Esophagus muscularis mucosa (tissue), 4 donors: ENCODE measurements at regions of chr16 and their contacts with region 1.

Region 1: GRCh38 chr16:49491771-49492761 is 118.5 kb downstream of the C16orf78 start:
- DNase-seq: no peak
- H3K4me3 ChIP-seq: peak overlapping the region; percentile 45 to 59 (median 46)
- H3K27ac ChIP-seq: peak overlapping the region in 1 of 4 donors; percentile 36
- H3K4me1 ChIP-seq: peaks cover 10 to 30% (median 17%) of the 10 kb centered on the region in 4 donors
- H3K27me3 ChIP-seq: no peaks in the 10 kb centered on the region
- CTCF ChIP-seq: peak; percentile 84 to 99 (median 95)
- EP300 ChIP-seq: no peak
- POLR2A ChIP-seq: no peak

Region 2: DNA sequence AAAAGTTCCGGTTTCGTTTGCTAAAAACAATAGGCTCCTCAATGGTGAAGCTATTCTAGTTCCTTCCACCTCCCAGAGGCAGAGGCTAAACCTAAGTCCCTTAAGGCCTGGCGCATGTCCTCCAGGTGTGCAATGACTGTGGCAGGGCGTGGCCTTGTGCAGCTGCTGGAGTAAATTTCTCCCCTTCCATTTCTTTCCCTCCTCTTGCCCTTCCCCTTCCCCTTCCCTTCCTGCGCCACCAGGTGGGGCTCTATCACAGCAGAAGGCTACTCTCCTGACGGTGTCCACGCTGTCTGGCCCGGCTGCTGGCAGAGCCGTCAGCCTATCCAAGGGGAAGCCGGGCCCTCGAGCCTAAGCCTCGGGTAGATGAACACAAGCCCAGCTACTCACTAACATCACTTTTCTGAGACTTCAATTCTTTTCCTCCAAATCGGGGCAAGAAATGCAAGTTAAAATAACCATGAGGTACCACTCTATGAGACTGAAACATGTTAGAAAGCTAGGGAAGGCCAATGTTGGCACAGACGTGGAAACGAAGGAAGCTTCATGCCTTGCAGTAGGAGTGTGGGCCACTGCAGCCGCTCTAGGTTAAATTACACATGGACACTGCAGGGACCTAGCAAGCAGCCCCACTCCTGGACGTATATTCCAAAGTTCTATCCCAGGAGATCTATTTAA is 84.1 kb before region 1 on chr16:
- intact Hi-C with region 1: loop called (anchors 5 kb)
- DNase-seq: no peak
- H3K4me3 ChIP-seq: no peak overlapping the region
- H3K27ac ChIP-seq: no peak overlapping the region
- H3K4me1 ChIP-seq: peaks cover 0 to 10% (median 7%) of the 10 kb centered on the region in 4 donors
- H3K27me3 ChIP-seq: no peaks in the 10 kb centered on the region
- CTCF ChIP-seq: peak; percentile 91 to 96 (median 92)
- EP300 ChIP-seq: no peak
- POLR2A ChIP-seq: no peak

Region 3: DNA sequence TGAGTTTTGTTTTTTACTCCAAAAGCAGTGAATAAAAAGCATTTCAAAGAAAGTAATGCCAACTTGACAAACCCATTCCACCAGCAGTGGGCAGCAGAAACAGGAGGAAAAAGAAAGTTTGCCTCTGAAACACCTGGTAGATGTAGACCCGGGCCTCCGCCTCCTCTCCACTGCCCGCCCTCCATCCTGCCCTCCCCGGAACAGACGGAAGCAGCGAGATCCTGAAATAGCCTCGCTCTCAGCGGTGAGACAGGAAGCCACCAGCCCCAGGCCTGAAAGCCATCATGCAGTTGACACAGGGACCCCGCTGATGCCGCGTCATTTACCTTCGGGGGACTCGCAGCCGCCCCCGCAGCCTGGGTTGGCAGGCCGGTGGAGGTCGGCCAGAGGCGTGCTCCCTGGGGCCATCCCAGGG is 50.7 kb before region 1 on chr16:
- intact Hi-C with region 1: no loop called
- DNase-seq: no peak
- H3K4me3 ChIP-seq: peak overlapping the region in 1 of 4 donors; percentile 13
- H3K27ac ChIP-seq: no peak overlapping the region
- H3K4me1 ChIP-seq: peaks cover 8 to 14% (median 9%) of the 10 kb centered on the region in 4 donors
- H3K27me3 ChIP-seq: peaks cover 0 to 20% (median 0%) of the 10 kb centered on the region in 4 donors
- CTCF ChIP-seq: peak in 1 of 3 experiments; percentile 11
- EP300 ChIP-seq: no peak
- POLR2A ChIP-seq: no peak

Region 4: DNA sequence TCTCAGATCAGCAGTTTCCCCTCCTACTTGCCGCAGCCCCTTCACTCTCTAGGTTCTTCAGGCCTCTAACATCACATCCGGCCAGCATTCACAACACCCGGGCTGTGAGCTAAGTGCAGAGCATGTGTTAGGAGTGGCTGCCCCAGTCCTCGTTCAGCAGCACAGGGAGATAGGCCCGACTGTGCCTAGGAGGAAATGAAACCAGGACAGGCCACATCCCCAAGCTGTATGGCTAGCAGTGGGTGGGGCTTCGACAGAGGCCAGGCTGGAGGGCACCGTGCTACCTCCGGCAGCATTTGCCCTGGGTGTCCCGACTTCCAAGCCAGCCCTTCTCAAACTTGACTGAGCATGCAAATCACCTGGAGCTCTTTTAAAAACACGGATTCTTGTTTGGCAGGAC is 83.3 kb after region 1 on chr16:
- intact Hi-C with region 1: no loop called
- DNase-seq: no peak
- H3K4me3 ChIP-seq: no peak overlapping the region
- H3K27ac ChIP-seq: no peak overlapping the region
- H3K4me1 ChIP-seq: peaks cover 0 to 3% (median 0%) of the 10 kb centered on the region in 4 donors
- H3K27me3 ChIP-seq: no peaks in the 10 kb centered on the region
- CTCF ChIP-seq: no peak
- EP300 ChIP-seq: no peak
- POLR2A ChIP-seq: no peak

Region 5: GRCh38 chr16:49592546-49593423 is 100.7 kb after region 1 on chr16:
- intact Hi-C with region 1: loop called (anchors 5 kb)
- DNase-seq: no peak
- H3K4me3 ChIP-seq: no peak overlapping the region
- H3K27ac ChIP-seq: no peak overlapping the region
- H3K4me1 ChIP-seq: peaks cover 3 to 31% (median 28%) of the 10 kb centered on the region in 4 donors
- H3K27me3 ChIP-seq: no peaks in the 10 kb centered on the region
- CTCF ChIP-seq: peak; percentile 57 to 84 (median 58)
- EP300 ChIP-seq: no peak
- POLR2A ChIP-seq: no peak

Region 6: GRCh38 chr16:49755313-49755620 is 263.2 kb after region 1 on chr16:
- intact Hi-C with region 1: loop called (anchors 5 kb)
- DNase-seq: no peak
- H3K4me3 ChIP-seq: peak overlapping the region; percentile 51 to 60 (median 56)
- H3K27ac ChIP-seq: peak overlapping the region; percentile 64 to 74 (median 70)
- H3K4me1 ChIP-seq: peaks cover 30 to 42% (median 31%) of the 10 kb centered on the region in 4 donors
- H3K27me3 ChIP-seq: no peaks in the 10 kb centered on the region
- CTCF ChIP-seq: peak; percentile 44 to 59 (median 51)
- EP300 ChIP-seq: no peak
- POLR2A ChIP-seq: no peak

Region 7: DNA sequence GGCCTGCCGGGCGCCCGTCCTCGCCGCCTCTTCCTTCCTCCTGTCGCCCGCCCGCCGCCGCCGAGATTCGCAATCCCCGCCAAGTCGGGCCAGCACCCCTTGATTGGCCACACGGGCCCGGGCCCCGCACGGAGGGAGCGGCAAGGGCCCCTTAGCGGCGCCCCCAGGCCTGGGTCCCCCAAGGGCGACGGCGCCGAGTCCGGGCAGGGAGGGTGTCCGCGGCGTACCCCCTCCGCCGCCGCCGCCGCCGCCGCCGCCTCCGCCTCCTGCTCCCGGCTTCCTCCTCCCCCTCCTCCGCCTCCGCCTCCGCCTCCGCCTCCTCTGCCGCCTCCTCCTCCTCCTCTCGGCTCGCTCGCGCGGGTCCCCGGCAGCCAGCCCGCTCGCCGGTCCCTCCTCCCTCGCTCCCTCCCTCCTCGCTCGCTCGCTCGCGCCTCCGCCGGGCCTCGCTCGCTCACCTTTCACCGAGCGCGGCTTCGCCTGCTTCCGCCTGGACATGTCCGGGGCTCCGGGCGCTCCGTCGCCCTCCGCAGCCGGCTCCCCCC is 363.3 kb after region 1 on chr16:
- intact Hi-C with region 1: loop called (anchors 5 kb)
- DNase-seq: no peak
- H3K4me3 ChIP-seq: peak overlapping the region; percentile 84 to 96 (median 87)
- H3K27ac ChIP-seq: peak overlapping the region; percentile 94 to 97 (median 96)
- H3K4me1 ChIP-seq: peaks cover 30 to 71% (median 68%) of the 10 kb centered on the region in 4 donors
- H3K27me3 ChIP-seq: peaks cover 0 to 5% (median 0%) of the 10 kb centered on the region in 4 donors
- CTCF ChIP-seq: peak in 1 of 3 experiments; percentile 15
- EP300 ChIP-seq: no peak
- POLR2A ChIP-seq: peak; percentile 75